Spleen (tissue), 13 donors: ENCODE measurements at regions of chr6 and their contacts with region 1.

Region 1: GRCh38 chr6:46996860-46997641 is 45.1 kb downstream of the ADGRF1 start:
- DNase-seq: no peak
- H3K4me3 ChIP-seq: no peak overlapping the region
- H3K27ac ChIP-seq: no peak overlapping the region
- H3K4me1 ChIP-seq: no peaks in the 10 kb centered on the region
- H3K27me3 ChIP-seq: no peaks in the 10 kb centered on the region
- CTCF ChIP-seq: no peak
- POLR2A ChIP-seq: no peak

Region 2: GRCh38 chr6:46848684-46849360 is 148.2 kb before region 1 on chr6:
- intact Hi-C with region 1: loop called (anchors 5 kb)
- DNase-seq: peak; percentile 94
- H3K4me3 ChIP-seq: peak overlapping the region in 1 of 8 donors; percentile 40
- H3K27ac ChIP-seq: no peak overlapping the region
- H3K4me1 ChIP-seq: peaks cover 3 to 14% (median 9%) of the 10 kb centered on the region in 6 donors
- H3K27me3 ChIP-seq: peaks cover 0 to 5% (median 0%) of the 10 kb centered on the region in 7 donors
- CTCF ChIP-seq: peak; percentile 58 to 97 (median 89)
- POLR2A ChIP-seq: no peak

Region 3: GRCh38 chr6:46876126-46876525 is 120.9 kb before region 1 on chr6:
- intact Hi-C with region 1: no loop called
- DNase-seq: no peak
- H3K4me3 ChIP-seq: no peak overlapping the region
- H3K27ac ChIP-seq: no peak overlapping the region
- H3K4me1 ChIP-seq: peaks cover 0 to 11% (median 3%) of the 10 kb centered on the region in 6 donors
- H3K27me3 ChIP-seq: peaks cover 0 to 3% (median 0%) of the 10 kb centered on the region in 7 donors
- CTCF ChIP-seq: no peak
- POLR2A ChIP-seq: no peak

Region 4: GRCh38 chr6:47477497-47478232 is 480.6 kb after region 1 on chr6 and contains the start of gene CD2AP:
- intact Hi-C with region 1: no loop called
- DNase-seq: peak; percentile 97
- H3K4me3 ChIP-seq: peak within 1 kb of the TSS; percentile 73 to 85 (median 80)
- H3K27ac ChIP-seq: peak within 1 kb of the TSS; percentile 94 to 98 (median 97)
- H3K4me1 ChIP-seq: peaks cover 14 to 56% (median 38%) of the 10 kb centered on the region in 6 donors
- H3K27me3 ChIP-seq: no peaks in the 10 kb centered on the region
- CTCF ChIP-seq: peak in 4 of 11 experiments; percentile 3 to 30 (median 14)
- POLR2A ChIP-seq: peak in 2 of 3 donors; percentile 8 to 44
- total RNA-seq, gene CD2AP: 25.3 to 41.9 (median 33.9) TPM